ENCODE measurements at regions of chr3 and their contacts with region 1.

Region 1: DNA sequence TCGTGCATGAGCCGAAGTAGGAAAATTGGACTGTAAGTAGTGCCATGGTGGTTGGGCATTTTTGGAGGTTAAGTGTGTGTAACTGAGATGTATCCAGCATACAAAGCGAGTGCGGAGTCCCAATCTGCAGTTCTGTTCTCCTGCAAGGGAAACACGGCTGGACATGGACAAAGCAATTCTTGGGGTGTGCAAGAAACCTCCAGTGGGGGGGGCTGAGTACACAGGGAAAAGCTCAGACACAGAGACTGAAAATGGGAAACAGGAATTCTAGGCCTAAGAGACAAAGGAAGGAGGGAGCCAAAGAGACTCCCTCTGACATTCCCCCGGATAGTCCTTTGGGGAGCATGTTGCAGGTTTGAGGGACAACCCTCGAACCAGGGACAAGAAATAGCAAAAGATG is 83.2 kb upstream of the PLSCR4 start:
- DNase-seq: no peak
- H3K4me3 ChIP-seq: no peak overlapping the region
- H3K27ac ChIP-seq: no peak overlapping the region
- H3K4me1 ChIP-seq: no peaks in the 10 kb centered on the region
- H3K27me3 ChIP-seq: no peaks in the 10 kb centered on the region
- CTCF ChIP-seq: peak in 1 of 6 experiments; percentile 34
- POLR2A ChIP-seq: no peak

Region 2: GRCh38 chr3:146052791-146053310 is 281.3 kb before region 1 on chr3:
- intact Hi-C with region 1: loop called (anchors 10 kb)
- DNase-seq: no peak
- H3K4me3 ChIP-seq: no peak overlapping the region
- H3K27ac ChIP-seq: no peak overlapping the region
- H3K4me1 ChIP-seq: no peaks in the 10 kb centered on the region
- H3K27me3 ChIP-seq: no peaks in the 10 kb centered on the region
- CTCF ChIP-seq: no peak
- POLR2A ChIP-seq: no peak

Region 3: GRCh38 chr3:146200461-146201220 is 133.5 kb before region 1 on chr3:
- intact Hi-C with region 1: no loop called
- DNase-seq: no peak
- H3K4me3 ChIP-seq: no peak overlapping the region
- H3K27ac ChIP-seq: no peak overlapping the region
- H3K4me1 ChIP-seq: peaks cover 0 to 3% (median 0%) of the 10 kb centered on the region in 3 donors
- H3K27me3 ChIP-seq: no peaks in the 10 kb centered on the region
- CTCF ChIP-seq: no peak
- POLR2A ChIP-seq: no peak

Region 4: DNA sequence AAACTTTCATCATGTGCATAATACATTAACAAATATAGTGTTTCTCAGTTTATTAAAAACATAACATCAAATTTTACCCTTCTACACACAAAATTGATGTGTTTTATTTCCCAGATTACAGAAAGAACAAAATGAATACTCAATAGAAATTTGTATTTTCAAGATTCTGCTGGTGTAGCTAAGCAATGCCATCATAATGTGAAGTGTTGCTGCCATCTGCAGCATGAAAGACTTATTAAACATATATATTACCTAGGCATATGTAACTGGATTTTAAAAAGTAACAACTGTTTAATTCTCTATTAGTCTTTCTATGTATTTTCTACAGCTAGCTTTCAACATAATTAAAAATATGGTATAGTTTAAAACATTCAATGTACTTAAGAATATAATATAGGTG is 243.5 kb after region 1 on chr3:
- intact Hi-C with region 1: loop called (anchors 10 kb)
- DNase-seq: no peak
- H3K4me3 ChIP-seq: no peak overlapping the region
- H3K27ac ChIP-seq: no peak overlapping the region
- H3K4me1 ChIP-seq: peaks cover 0 to 6% (median 0%) of the 10 kb centered on the region in 3 donors
- H3K27me3 ChIP-seq: no peaks in the 10 kb centered on the region
- CTCF ChIP-seq: peak in 5 of 6 experiments; percentile 28 to 59 (median 34)
- POLR2A ChIP-seq: no peak